ENCODE measurements at regions of chr1 and their contacts with region 1.

Region 1: GRCh38 chr1:160777486-160778089 is 18.4 kb upstream of the LY9 start:
- DNase-seq: peak in 1 of 2 experiments; percentile 70
- H3K4me3 ChIP-seq: no peak overlapping the region
- H3K27ac ChIP-seq: no peak overlapping the region
- H3K4me1 ChIP-seq: no peaks in the 10 kb centered on the region
- H3K27me3 ChIP-seq: no peaks in the 10 kb centered on the region
- CTCF ChIP-seq: peak; percentile 26 to 71 (median 67)
- EP300 ChIP-seq: no peak
- POLR2A ChIP-seq: no peak
- RAD21 ChIP-seq: peak; percentile 67 to 70

Region 2: DNA sequence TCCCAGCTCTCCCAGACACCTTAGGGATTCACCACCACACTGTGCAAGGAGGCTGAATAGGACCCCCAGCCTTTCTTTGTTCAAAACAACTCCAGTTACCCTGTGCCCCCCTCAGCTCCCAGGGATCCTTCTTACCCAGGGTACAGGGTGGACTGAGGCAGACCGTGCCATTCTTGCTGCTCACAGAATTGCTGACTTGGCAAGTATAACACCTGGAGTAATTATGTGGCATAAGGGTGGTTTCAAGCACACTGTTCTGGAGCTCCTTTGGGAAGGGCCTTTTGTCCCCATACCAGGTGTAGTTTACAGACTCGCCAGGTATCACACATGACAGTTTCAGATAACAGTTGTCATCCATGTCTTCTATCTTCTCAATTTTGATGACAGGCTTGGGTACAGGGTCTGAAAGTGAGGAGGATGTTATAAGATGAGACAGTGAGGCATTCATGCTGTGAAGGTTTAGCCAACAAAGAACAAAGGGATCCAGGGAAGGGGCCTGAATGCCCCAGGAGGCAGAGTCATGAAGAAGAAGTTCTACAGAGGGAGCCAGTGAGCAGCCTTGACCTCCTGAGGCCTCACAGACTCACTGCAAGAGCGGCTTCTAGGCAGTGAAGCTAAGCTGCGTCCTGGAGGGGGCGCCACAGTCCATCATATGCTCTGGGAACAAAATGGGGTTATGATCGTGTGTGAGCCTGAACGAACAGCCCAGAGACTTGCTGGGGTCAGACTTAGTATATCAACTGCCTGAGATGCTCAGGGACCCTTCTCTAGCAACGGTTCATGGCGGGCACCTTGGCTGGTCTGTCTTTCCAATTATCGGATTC is 96.3 kb before region 1 on chr1:
- CTCF ChIA-PET with region 1: interaction called, 75 read pairs
- POLR2A ChIA-PET with region 1: no interaction called
- DNase-seq: peak; percentile 90 to 92
- H3K4me3 ChIP-seq: no peak overlapping the region
- H3K27ac ChIP-seq: no peak overlapping the region
- H3K4me1 ChIP-seq: peaks cover 0 to 4% (median 0%) of the 10 kb centered on the region in 4 experiments; a peak in 1 of 7 replicates
- H3K27me3 ChIP-seq: no peaks in the 10 kb centered on the region
- CTCF ChIP-seq: peak; percentile 98 to 100 (median 99)
- EP300 ChIP-seq: no peak
- POLR2A ChIP-seq: no peak
- RAD21 ChIP-seq: peak; percentile 98 to 99

Region 3: DNA sequence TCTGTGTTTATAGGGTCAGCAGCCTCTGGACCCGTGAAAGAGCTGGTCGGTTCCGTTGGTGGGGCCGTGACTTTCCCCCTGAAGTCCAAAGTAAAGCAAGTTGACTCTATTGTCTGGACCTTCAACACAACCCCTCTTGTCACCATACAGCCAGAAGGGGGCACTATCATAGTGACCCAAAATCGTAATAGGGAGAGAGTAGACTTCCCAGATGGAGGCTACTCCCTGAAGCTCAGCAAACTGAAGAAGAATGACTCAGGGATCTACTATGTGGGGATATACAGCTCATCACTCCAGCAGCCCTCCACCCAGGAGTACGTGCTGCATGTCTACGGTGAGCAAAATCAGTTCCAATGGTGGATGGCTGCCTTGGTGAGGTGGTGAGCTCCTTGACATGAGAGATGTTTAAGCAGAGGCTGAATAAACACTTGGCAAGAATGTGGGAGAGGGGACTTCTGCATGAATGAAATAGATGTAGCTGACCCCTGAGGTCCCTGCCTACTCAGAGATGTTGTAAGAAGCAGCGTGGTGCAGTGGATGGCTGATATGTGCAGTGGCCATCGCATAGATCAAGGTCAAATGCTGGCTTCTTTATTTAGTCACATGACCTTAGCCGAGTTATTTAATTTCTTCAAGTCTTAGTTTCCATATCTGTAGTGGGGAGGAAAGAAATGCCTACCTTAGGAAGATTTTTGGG is 29.3 kb before region 1 on chr1:
- CTCF ChIA-PET with region 1: interaction called, 42 read pairs
- POLR2A ChIA-PET with region 1: no interaction called
- DNase-seq: no peak
- H3K4me3 ChIP-seq: no peak overlapping the region
- H3K27ac ChIP-seq: no peak overlapping the region
- H3K4me1 ChIP-seq: peaks cover 0 to 5% (median 0%) of the 10 kb centered on the region in 4 experiments; a peak in 2 of 7 replicates
- H3K27me3 ChIP-seq: no peaks in the 10 kb centered on the region
- CTCF ChIP-seq: peak in 2 of 3 experiments; percentile 34 to 50; a peak in 2 of 4 replicates
- EP300 ChIP-seq: no peak
- POLR2A ChIP-seq: no peak
- RAD21 ChIP-seq: peak; percentile 29 to 36; a peak in 3 of 4 replicates

Region 4: GRCh38 chr1:160795951-160796383 is 18.4 kb after region 1 on chr1 and contains the start of gene LY9:
- CTCF ChIA-PET with region 1: interaction called, 80 read pairs
- POLR2A ChIA-PET with region 1: interaction called, 4 read pairs
- DNase-seq: no peak
- H3K4me3 ChIP-seq: no peak within 1 kb of the TSS
- H3K27ac ChIP-seq: no peak within 1 kb of the TSS
- H3K4me1 ChIP-seq: no peaks in the 10 kb centered on the region
- H3K27me3 ChIP-seq: no peaks in the 10 kb centered on the region
- CTCF ChIP-seq: no peak
- EP300 ChIP-seq: no peak
- POLR2A ChIP-seq: no peak
- RAD21 ChIP-seq: no peak
- total RNA-seq, gene LY9: not detected in 2 replicates

Region 5: GRCh38 chr1:160830321-160831153 is 52.9 kb after region 1 on chr1:
- CTCF ChIA-PET with region 1: interaction called, 47 read pairs
- POLR2A ChIA-PET with region 1: no interaction called
- DNase-seq: peak in 1 of 2 experiments; percentile 91
- H3K4me3 ChIP-seq: no peak overlapping the region
- H3K27ac ChIP-seq: no peak overlapping the region
- H3K4me1 ChIP-seq: no peaks in the 10 kb centered on the region
- H3K27me3 ChIP-seq: no peaks in the 10 kb centered on the region
- CTCF ChIP-seq: peak; percentile 82 to 93 (median 89)
- EP300 ChIP-seq: no peak
- POLR2A ChIP-seq: no peak
- RAD21 ChIP-seq: peak; percentile 75 to 80

Measured in H1 (cell line).